ENCODE measurements at regions of chr9 and their contacts with region 1.

Region 1: GRCh38 chr9:91328186-91328585 is 33.5 kb downstream of the AUH start:
- DNase-seq: no peak
- ATAC-seq: no peak
- H3K4me3 ChIP-seq: no peak overlapping the region
- H3K27ac ChIP-seq: no peak overlapping the region
- H3K4me1 ChIP-seq: no peaks in the 10 kb centered on the region
- H3K27me3 ChIP-seq: no peaks in the 10 kb centered on the region
- CTCF ChIP-seq: no peak
- POLR2A ChIP-seq: no peak
- RAD21 ChIP-seq: no peak

Region 2: GRCh38 chr9:91101611-91102168 is 226.5 kb before region 1 on chr9:
- CTCF ChIA-PET with region 1: no interaction called
- POLR2A ChIA-PET with region 1: no interaction called
- RAD21 ChIA-PET with region 1: interaction called in 1 of 2 experiments, 12 read pairs
- intact Hi-C with region 1: no loop called
- DNase-seq: no peak
- ATAC-seq: no peak
- H3K4me3 ChIP-seq: no peak overlapping the region
- H3K27ac ChIP-seq: no peak overlapping the region
- H3K4me1 ChIP-seq: peaks cover 25 to 49% of the 10 kb centered on the region in 2 experiments
- H3K27me3 ChIP-seq: no peaks in the 10 kb centered on the region
- CTCF ChIP-seq: no peak
- POLR2A ChIP-seq: no peak
- RAD21 ChIP-seq: no peak